Psoas muscle (tissue), 8 donors: ENCODE measurements at regions of chr6 and their contacts with region 1.

Region 1: DNA sequence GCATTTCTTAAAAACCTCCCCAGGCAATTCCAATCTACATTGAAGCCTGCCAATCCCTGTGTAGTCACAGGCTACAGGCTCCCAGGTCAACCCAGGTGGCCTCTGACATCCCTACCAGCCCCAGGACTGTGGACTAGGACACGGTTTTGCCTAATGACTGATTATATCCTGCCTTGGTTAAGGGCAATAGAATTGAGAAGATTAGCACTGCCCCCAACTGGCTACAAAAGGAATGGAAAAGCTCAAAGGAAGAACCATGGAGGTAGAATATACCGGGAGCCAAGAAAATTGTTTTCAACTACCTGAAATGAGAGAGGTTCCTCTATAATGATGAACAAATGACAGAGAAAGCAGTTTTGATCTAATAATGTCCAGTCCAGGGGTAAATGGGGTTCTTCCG is 421.1 kb upstream of the AGPAT4 start:
- DNase-seq: no peak
- ATAC-seq: no peak
- H3K4me3 ChIP-seq: no peak overlapping the region
- H3K27ac ChIP-seq: no peak overlapping the region
- H3K4me1 ChIP-seq: no peaks in the 10 kb centered on the region
- H3K27me3 ChIP-seq: no peaks in the 10 kb centered on the region
- CTCF ChIP-seq: peak; percentile 48

Region 2: GRCh38 chr6:161393839-161394364 is 301.1 kb before region 1 on chr6:
- intact Hi-C with region 1: loop called in 1 of 2 experiments (anchors 10 kb)
- DNase-seq: no peak
- ATAC-seq: peak; percentile 92 to 99 (median 97)
- H3K4me3 ChIP-seq: peak overlapping the region; percentile 15
- H3K27ac ChIP-seq: no peak overlapping the region
- H3K4me1 ChIP-seq: peaks cover 10% of the 10 kb centered on the region
- H3K27me3 ChIP-seq: no peaks in the 10 kb centered on the region
- CTCF ChIP-seq: peak; percentile 79

Region 3: GRCh38 chr6:161418463-161418945 is 276.5 kb before region 1 on chr6:
- intact Hi-C with region 1: loop called (anchors 5 to 10 kb)
- DNase-seq: no peak
- ATAC-seq: peak; percentile 62 to 81 (median 77)
- H3K4me3 ChIP-seq: no peak overlapping the region
- H3K27ac ChIP-seq: peak overlapping the region; percentile 84
- H3K4me1 ChIP-seq: peaks cover 19% of the 10 kb centered on the region
- H3K27me3 ChIP-seq: no peaks in the 10 kb centered on the region
- CTCF ChIP-seq: peak; percentile 78

Region 4: DNA sequence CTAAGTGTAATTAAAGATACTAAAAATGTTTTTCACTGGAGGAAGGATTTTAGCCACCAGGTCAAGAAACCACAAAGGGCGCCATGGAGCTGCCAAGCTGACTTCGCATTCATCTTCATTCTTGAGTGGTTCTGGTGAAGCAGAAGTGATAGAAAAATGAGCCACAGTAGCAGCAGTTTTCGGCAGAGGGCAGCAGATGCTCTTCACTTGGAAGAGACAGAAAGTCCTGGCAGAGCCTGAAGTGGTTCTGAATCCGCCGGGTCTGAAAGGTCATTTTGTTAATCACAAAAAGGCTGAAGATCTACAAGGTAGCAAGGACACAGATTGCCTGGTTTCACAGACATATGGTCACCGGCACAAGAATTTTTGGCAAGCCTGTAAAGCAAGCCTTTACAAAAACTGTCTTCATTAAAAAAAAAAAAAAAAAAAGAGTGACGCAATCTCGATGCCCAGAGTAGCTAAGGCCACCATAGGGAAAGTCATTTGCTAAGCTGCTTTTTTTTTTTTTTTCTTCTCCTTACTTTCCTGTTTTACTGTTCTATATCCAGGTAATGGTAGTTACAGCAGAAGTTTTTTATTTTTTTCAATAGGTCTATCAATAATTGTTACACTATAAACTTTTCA is 76.1 kb before region 1 on chr6:
- intact Hi-C with region 1: loop called in 1 of 2 experiments (anchors 5 kb)
- DNase-seq: peak in 1 of 2 donors; percentile 21
- ATAC-seq: peak; percentile 58 to 85 (median 68)
- H3K4me3 ChIP-seq: peak overlapping the region; percentile 39
- H3K27ac ChIP-seq: no peak overlapping the region
- H3K4me1 ChIP-seq: no peaks in the 10 kb centered on the region
- H3K27me3 ChIP-seq: no peaks in the 10 kb centered on the region
- CTCF ChIP-seq: peak; percentile 51